ENCODE measurements at regions of chr11 and their contacts with region 1.

Region 1: GRCh38 chr11:75802913-75803820 is 11.8 kb upstream of the UVRAG start:
- DNase-seq: peak; percentile 54 to 65
- H3K4me3 ChIP-seq: no peak overlapping the region
- H3K27ac ChIP-seq: no peak overlapping the region
- H3K4me1 ChIP-seq: no peaks in the 10 kb centered on the region
- H3K27me3 ChIP-seq: no peaks in the 10 kb centered on the region
- CTCF ChIP-seq: peak; percentile 97

Region 2: GRCh38 chr11:75465701-75466531 is 337.3 kb before region 1 on chr11:
- CTCF ChIA-PET with region 1: interaction called, 14 read pairs
- POLR2A ChIA-PET with region 1: no interaction called
- intact Hi-C with region 1: no loop called
- DNase-seq: peak in 1 of 2 experiments; percentile 61
- H3K4me3 ChIP-seq: no peak overlapping the region
- H3K27ac ChIP-seq: no peak overlapping the region
- H3K4me1 ChIP-seq: peaks cover 14% of the 10 kb centered on the region
- H3K27me3 ChIP-seq: no peaks in the 10 kb centered on the region
- CTCF ChIP-seq: no peak

Region 3: DNA sequence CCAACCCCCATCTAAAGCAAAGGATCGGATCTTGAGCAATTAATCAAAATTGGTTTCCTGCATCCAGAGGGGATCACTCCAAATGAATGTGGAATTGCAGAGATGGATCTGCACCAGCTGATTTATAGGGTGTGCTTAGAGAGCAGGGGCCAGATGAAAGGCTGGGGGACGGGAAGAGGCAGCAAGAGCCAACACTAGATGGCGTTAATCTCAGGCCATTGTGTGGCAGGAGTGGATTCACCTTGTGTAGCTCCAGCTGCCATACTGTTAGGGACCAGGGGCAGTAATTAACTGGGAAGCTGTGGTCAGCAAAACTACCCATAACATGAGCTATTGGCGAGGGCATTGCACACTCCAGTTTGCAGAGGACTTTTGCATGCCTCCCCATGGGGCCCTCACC is 205.5 kb before region 1 on chr11:
- CTCF ChIA-PET with region 1: no interaction called
- POLR2A ChIA-PET with region 1: no interaction called
- intact Hi-C with region 1: loop called (anchors 5 kb)
- DNase-seq: no peak
- H3K4me3 ChIP-seq: no peak overlapping the region
- H3K27ac ChIP-seq: no peak overlapping the region
- H3K4me1 ChIP-seq: no peaks in the 10 kb centered on the region
- H3K27me3 ChIP-seq: 0 out of 2 replicates have a peak, but pooled peaks cover 7% of the 10 kb centered on the region
- CTCF ChIP-seq: peak; percentile 69

Region 4: DNA sequence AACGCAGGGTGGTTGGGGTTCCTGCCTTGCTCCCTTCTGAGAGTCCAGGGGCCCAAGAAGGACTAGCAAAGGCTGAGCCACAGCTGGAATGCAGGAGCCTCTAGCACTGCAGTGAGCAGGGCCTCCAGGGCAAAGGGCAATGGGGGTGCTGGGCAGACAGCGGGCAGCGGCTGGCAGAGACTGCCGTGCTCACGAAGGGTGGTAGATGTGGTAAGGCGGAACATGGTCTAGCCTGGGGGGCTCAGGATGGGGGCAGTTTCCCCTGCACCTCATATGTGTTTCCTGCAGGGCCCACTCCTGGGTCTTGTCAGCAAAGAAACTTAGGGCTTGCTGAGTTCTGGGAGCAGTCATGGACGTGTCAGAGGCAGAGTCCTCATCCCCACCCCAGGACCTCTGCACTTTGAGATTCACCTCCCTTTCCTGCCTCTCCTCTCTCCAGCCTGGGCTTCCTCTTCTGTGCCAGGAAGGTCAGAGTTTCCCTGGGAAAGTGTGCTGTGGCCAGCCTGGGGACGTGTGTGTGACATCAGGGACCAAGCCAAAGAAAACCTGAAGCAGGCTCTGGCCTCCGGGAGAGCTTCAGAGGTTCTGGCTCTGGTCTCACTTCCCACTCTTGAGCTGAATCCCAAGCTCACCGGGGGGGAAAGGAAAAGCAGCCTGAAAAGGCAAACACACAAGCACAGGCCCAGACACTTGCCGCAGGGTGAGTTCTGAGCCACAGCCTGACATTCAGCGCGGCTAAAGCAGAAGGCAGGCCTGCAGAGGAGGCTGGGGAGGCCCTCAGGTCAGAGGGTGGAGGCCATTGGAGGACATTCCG is 81.1 kb before region 1 on chr11:
- CTCF ChIA-PET with region 1: no interaction called
- POLR2A ChIA-PET with region 1: interaction called, 4 read pairs
- intact Hi-C with region 1: loop called (anchors 5 kb)
- DNase-seq: no peak
- H3K4me3 ChIP-seq: no peak overlapping the region
- H3K27ac ChIP-seq: no peak overlapping the region
- H3K4me1 ChIP-seq: peaks cover 11% of the 10 kb centered on the region
- H3K27me3 ChIP-seq: no peaks in the 10 kb centered on the region
- CTCF ChIP-seq: no peak

Region 5: DNA sequence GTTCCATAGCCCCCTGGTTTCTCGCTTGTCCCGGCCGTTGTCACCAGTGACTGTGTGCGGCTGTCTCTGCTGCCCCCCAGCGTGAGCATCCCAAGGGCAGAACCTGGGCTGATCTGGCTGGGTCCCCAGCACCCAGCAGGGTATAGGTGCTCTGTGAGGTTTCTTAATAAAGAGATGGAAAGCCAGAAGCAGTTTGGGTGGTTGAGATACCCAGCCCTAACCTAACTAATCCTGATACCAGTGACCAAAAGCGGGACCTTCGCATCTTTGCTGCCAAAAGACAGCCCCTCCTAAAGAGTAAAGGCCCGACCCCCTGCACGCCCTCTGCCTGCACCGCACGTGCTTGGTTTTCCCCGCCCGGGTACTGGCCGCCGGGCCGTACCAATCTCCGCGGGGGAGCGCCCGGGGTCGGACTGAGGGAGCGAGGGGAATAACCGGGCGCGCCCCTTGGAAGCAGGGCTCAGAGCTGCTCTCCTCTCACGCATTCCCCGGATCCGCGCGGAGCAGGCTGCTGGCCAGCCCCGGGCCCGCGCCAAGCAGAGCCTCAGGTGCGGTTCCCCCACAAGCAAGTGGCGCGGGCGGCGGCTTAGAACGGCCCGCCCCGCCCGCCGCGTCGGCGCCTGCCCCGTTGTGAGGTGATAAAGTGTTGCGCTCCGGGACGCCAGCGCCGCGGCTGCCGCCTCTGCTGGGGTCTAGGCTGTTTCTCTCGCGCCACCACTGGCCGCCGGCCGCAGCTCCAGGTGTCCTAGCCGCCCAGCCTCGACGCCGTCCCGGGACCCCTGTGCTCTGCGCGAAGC is 34.9 kb before region 1 on chr11 and contains the start of gene DGAT2:
- CTCF ChIA-PET with region 1: no interaction called
- POLR2A ChIA-PET with region 1: no interaction called
- intact Hi-C with region 1: no loop called
- DNase-seq: peak; percentile 53 to 75
- H3K4me3 ChIP-seq: peak within 1 kb of the TSS; percentile 80
- H3K27ac ChIP-seq: peak within 1 kb of the TSS; percentile 84
- H3K4me1 ChIP-seq: peaks cover 52% of the 10 kb centered on the region
- H3K27me3 ChIP-seq: no peaks in the 10 kb centered on the region
- CTCF ChIP-seq: peak; percentile 48; the same call in 1 of the 2 replicates
- total RNA-seq, gene DGAT2: 6.5 and 7.1 TPM in 2 replicates

Region 6: DNA sequence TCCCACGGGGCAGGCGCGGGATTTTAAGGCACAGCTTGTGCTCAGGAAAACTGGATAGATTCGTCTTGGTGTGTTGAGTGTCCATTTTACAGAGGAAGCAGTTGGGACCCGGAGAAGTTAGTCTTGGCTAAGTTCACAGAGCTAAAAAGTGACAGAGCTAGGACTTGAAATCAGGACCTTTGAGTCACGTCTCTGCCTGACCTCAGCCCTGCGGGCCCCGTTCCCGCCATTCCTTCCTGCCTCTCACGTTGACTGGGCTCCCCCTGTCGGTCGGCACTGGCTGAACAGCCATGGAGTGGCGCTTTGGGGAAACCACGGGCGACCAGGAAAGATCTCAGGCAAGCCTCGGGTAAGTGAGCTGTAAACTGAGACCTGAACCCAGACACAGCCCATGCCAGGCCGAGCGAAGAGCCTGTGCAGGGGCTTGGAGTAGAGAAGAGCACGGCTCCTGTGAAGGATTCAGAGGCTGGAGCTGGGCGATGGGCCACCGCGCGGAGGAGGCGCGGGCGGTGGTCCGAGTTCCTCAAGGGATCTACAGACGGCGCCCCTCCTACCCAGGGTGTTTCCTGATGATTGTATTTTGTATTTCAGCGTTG is 349.0 kb after region 1 on chr11:
- CTCF ChIA-PET with region 1: no interaction called
- POLR2A ChIA-PET with region 1: no interaction called
- intact Hi-C with region 1: loop called (anchors 2 kb)
- DNase-seq: peak in 1 of 2 experiments; percentile 76
- H3K4me3 ChIP-seq: no peak overlapping the region
- H3K27ac ChIP-seq: peak overlapping the region; percentile 88
- H3K4me1 ChIP-seq: peaks cover 37% of the 10 kb centered on the region
- H3K27me3 ChIP-seq: no peaks in the 10 kb centered on the region
- CTCF ChIP-seq: peak; percentile 72

Measured in PC-9 (cell line).